ENCODE measurements at regions of chr1 and their contacts with region 1.

Region 1: DNA sequence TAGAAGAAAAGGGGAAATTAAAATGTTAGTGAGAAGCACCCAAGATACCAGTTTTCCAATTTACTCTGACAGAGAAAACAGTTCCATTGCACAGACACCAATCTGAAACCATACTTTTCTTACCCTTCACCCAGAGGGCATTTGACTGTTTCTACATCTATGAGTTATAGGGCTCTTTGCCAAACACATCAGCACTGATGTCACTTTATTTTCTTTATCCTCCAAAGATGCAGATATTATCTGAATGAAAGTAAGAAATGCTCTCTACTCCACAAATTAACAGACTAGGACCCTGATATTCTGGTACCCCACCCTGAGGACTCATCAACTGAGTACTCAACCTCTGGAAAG is 24.2 kb upstream of the PEX19 start:
- DNase-seq: peak; percentile 11
- H3K4me3 ChIP-seq: no peak overlapping the region
- H3K27ac ChIP-seq: no peak overlapping the region
- H3K4me1 ChIP-seq: no peaks in the 10 kb centered on the region
- H3K27me3 ChIP-seq: no peaks in the 10 kb centered on the region
- CTCF ChIP-seq: no peak

Region 2: DNA sequence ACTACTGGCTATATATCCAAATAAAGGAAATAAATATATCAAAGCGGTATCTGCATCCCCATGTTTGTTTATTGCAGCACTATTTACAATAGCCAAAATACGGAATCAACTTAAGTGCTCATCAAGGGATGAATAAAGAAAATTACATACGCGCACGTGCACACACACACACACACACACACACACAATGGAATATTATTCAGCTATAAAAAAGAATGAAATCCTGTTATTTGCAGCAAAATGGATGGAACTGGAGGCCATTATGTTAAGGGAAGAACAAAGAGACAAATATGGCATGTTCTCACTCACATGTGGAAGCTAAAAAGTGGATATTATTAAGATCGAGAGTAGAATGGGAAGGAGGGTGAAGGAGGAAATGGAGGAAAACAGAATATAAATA is 13.7 kb after region 1 on chr1:
- CTCF ChIA-PET with region 1: no interaction called
- dilution Hi-C with region 1: no loop called
- in situ Hi-C with region 1: no loop called
- intact Hi-C with region 1: loop called (anchors 2 kb)
- DNase-seq: no peak
- H3K4me3 ChIP-seq: no peak overlapping the region
- H3K27ac ChIP-seq: no peak overlapping the region
- H3K4me1 ChIP-seq: no peaks in the 10 kb centered on the region
- H3K27me3 ChIP-seq: no peaks in the 10 kb centered on the region
- CTCF ChIP-seq: no peak